ENCODE measurements at regions of chr14 and their contacts with region 1.

Region 1: GRCh38 chr14:22986508-22987054 is 4.2 kb upstream of the AJUBA start:
- DNase-seq: peak; percentile 75 to 89 (median 79)
- H3K4me3 ChIP-seq: no peak overlapping the region
- H3K4me3 Mint-ChIP-seq: peak overlapping the region in 1 of 7 donors; percentile 60
- H3K27ac ChIP-seq: no peak overlapping the region
- H3K27ac Mint-ChIP-seq: peak overlapping the region in 2 of 8 donors; percentile 12 to 29
- H3K4me1 ChIP-seq: peaks cover 7% of the 10 kb centered on the region
- H3K4me1 Mint-ChIP-seq: no peaks in the 10 kb centered on the region
- H3K27me3 ChIP-seq: no peaks in the 10 kb centered on the region
- H3K27me3 Mint-ChIP-seq: no peaks in the 10 kb centered on the region

Region 2: GRCh38 chr14:22822571-22823098 is 163.9 kb before region 1 on chr14:
- CTCF ChIA-PET with region 1: interaction called, 12 read pairs
- POLR2A ChIA-PET with region 1: no interaction called
- DNase-seq: peak; percentile 53 to 81 (median 57)
- H3K4me3 ChIP-seq: peak overlapping the region; percentile 13
- H3K4me3 Mint-ChIP-seq: peak overlapping the region in 6 of 7 donors; percentile 41 to 72 (median 66)
- H3K27ac ChIP-seq: no peak overlapping the region
- H3K27ac Mint-ChIP-seq: peak overlapping the region in 1 of 8 donors; percentile 15
- H3K4me1 ChIP-seq: peaks cover 19% of the 10 kb centered on the region
- H3K4me1 Mint-ChIP-seq: peaks cover 8 to 12% (median 9%) of the 10 kb centered on the region in 3 donors
- H3K27me3 ChIP-seq: no peaks in the 10 kb centered on the region
- H3K27me3 Mint-ChIP-seq: peaks cover 35 to 45% of the 10 kb centered on the region in 2 donors

Region 3: GRCh38 chr14:22837750-22838538 is 148.6 kb before region 1 on chr14:
- CTCF ChIA-PET with region 1: no interaction called
- POLR2A ChIA-PET with region 1: no interaction called
- DNase-seq: no peak
- H3K4me3 ChIP-seq: no peak overlapping the region
- H3K4me3 Mint-ChIP-seq: peak overlapping the region in 1 of 7 donors; percentile 11
- H3K27ac ChIP-seq: no peak overlapping the region
- H3K27ac Mint-ChIP-seq: no peak overlapping the region
- H3K4me1 ChIP-seq: peaks cover 3% of the 10 kb centered on the region
- H3K4me1 Mint-ChIP-seq: peaks cover 0 to 7% (median 6%) of the 10 kb centered on the region in 3 donors
- H3K27me3 ChIP-seq: peaks cover 5% of the 10 kb centered on the region
- H3K27me3 Mint-ChIP-seq: peaks cover 30 to 37% of the 10 kb centered on the region in 2 donors

Region 4: GRCh38 chr14:22955702-22956569 is 30.6 kb before region 1 on chr14:
- CTCF ChIA-PET with region 1: interaction called, 16 read pairs
- POLR2A ChIA-PET with region 1: interaction called, 5 read pairs
- DNase-seq: no peak
- H3K4me3 ChIP-seq: peak overlapping the region; percentile 87
- H3K4me3 Mint-ChIP-seq: peak overlapping the region; percentile 89 to 96 (median 91)
- H3K27ac ChIP-seq: peak overlapping the region; percentile 84
- H3K27ac Mint-ChIP-seq: peak overlapping the region; percentile 67 to 97 (median 90)
- H3K4me1 ChIP-seq: peaks cover 19% of the 10 kb centered on the region
- H3K4me1 Mint-ChIP-seq: peaks cover 14 to 24% (median 17%) of the 10 kb centered on the region in 3 donors
- H3K27me3 ChIP-seq: no peaks in the 10 kb centered on the region
- H3K27me3 Mint-ChIP-seq: no peaks in the 10 kb centered on the region

Region 5: GRCh38 chr14:22973217-22974032 is 13.2 kb before region 1 on chr14:
- CTCF ChIA-PET with region 1: interaction called, 155 read pairs
- POLR2A ChIA-PET with region 1: interaction called, 3 read pairs
- DNase-seq: peak in 3 of 5 donors; percentile 27 to 53 (median 34)
- H3K4me3 ChIP-seq: no peak overlapping the region
- H3K4me3 Mint-ChIP-seq: peak overlapping the region in 1 of 7 donors; percentile 32
- H3K27ac ChIP-seq: no peak overlapping the region
- H3K27ac Mint-ChIP-seq: peak overlapping the region in 1 of 8 donors; percentile 31
- H3K4me1 ChIP-seq: no peaks in the 10 kb centered on the region
- H3K4me1 Mint-ChIP-seq: no peaks in the 10 kb centered on the region
- H3K27me3 ChIP-seq: peaks cover 4% of the 10 kb centered on the region
- H3K27me3 Mint-ChIP-seq: peaks cover 3 to 9% of the 10 kb centered on the region in 2 donors

Region 6: GRCh38 chr14:23006544-23007419 is 20.2 kb after region 1 on chr14:
- CTCF ChIA-PET with region 1: interaction called, 51 read pairs
- POLR2A ChIA-PET with region 1: interaction called, 4 read pairs
- DNase-seq: peak; percentile 95 to 99 (median 98)
- H3K4me3 ChIP-seq: peak overlapping the region; percentile 68
- H3K4me3 Mint-ChIP-seq: peak overlapping the region; percentile 90 to 98 (median 97)
- H3K27ac ChIP-seq: peak overlapping the region; percentile 88
- H3K27ac Mint-ChIP-seq: peak overlapping the region; percentile 84 to 99 (median 98)
- H3K4me1 ChIP-seq: peaks cover 36% of the 10 kb centered on the region
- H3K4me1 Mint-ChIP-seq: peaks cover 40 to 56% (median 55%) of the 10 kb centered on the region in 3 donors
- H3K27me3 ChIP-seq: no peaks in the 10 kb centered on the region
- H3K27me3 Mint-ChIP-seq: no peaks in the 10 kb centered on the region

Region 7: DNA sequence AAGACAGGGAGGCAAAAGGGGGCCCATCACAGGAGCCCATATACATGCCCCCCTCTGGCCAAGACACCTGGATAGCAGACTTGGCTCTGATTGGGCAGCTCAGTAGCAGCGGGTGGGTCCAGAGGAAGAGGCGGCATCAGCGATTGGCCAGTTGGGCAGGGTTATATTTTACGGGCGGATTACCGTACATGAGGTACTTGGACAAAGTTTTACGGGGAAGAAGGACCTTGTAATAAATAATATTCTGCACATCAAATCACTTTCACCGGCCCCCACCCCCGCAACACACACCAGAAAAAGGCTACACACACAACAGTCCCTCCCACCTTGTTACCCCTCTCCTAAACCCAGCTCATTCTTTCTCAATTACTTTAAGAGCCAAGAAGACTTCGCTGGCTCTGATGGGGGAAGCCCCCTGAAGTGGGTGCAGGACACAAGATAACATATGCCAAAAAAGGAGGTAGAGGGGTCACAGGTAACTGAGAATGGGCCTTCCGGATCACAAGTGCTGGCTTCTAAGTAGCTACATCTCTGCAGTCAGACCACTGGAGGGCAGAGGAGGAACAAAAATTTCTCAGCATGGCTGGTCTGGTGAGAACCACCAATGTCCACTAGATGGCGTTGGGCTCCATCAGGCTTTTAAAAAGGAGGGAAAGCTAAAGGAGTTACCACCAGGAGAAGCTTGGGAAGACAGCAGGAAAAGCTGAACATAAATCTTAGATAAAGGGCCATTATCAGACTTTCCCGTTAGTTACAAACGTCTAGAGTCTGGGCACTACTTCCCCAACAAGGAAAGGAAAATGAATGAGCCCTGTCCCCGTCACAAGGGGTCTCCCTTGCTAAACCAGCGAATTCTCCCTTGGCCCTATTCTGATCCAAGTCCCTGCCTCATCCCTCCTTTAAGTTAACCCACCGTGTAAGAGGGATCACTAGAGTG is 82.2 kb after region 1 on chr14:
- CTCF ChIA-PET with region 1: interaction called, 732 read pairs
- POLR2A ChIA-PET with region 1: no interaction called
- DNase-seq: peak; percentile 49 to 79 (median 72)
- H3K4me3 ChIP-seq: no peak overlapping the region
- H3K4me3 Mint-ChIP-seq: peak overlapping the region in 6 of 7 donors; percentile 10 to 72 (median 48)
- H3K27ac ChIP-seq: no peak overlapping the region
- H3K27ac Mint-ChIP-seq: peak overlapping the region; percentile 49 to 96 (median 72)
- H3K4me1 ChIP-seq: peaks cover 28% of the 10 kb centered on the region
- H3K4me1 Mint-ChIP-seq: peaks cover 37 to 50% (median 41%) of the 10 kb centered on the region in 3 donors
- H3K27me3 ChIP-seq: no peaks in the 10 kb centered on the region
- H3K27me3 Mint-ChIP-seq: no peaks in the 10 kb centered on the region